ENCODE measurements at regions of chr1 and their contacts with region 1.

Region 1: DNA sequence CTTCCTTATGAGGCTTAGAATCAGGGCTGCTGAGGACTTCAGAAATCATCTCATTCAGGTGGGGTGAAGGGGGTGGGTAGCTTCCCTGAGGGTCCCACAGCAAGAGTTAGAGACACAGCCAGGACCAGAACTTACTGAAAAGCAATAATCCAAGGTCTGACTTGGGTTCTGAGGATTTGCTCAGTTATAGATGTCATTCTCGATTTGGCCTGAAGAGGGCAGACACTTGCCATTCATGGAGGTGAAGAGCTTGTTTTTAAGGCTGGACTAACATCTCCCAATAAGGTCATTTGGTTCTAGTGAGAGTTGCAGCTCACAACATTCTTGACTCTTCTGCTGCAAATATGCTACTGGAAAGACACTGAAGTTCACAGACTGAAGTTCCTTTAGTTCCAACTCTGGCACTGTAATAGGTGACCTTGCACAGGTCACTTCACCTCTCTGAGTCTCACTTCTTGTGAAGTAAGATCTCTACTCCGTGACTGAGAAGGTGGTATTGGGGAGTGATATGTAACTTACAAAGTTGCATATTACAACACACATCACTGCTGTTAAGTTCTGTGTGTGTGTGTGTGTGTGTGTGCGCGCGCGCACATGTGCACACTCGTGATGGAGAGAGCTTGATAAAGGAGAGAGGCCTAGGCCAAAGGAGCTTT is 69.8 kb upstream of the DIRAS3 start:
- DNase-seq: peak; percentile 44
- ATAC-seq: peak; percentile 57
- H3K4me3 Mint-ChIP-seq: no peak overlapping the region
- H3K27ac Mint-ChIP-seq: no peak overlapping the region
- H3K4me1 Mint-ChIP-seq: peaks cover 2% of the 10 kb centered on the region
- H3K27me3 Mint-ChIP-seq: no peaks in the 10 kb centered on the region

Region 2: DNA sequence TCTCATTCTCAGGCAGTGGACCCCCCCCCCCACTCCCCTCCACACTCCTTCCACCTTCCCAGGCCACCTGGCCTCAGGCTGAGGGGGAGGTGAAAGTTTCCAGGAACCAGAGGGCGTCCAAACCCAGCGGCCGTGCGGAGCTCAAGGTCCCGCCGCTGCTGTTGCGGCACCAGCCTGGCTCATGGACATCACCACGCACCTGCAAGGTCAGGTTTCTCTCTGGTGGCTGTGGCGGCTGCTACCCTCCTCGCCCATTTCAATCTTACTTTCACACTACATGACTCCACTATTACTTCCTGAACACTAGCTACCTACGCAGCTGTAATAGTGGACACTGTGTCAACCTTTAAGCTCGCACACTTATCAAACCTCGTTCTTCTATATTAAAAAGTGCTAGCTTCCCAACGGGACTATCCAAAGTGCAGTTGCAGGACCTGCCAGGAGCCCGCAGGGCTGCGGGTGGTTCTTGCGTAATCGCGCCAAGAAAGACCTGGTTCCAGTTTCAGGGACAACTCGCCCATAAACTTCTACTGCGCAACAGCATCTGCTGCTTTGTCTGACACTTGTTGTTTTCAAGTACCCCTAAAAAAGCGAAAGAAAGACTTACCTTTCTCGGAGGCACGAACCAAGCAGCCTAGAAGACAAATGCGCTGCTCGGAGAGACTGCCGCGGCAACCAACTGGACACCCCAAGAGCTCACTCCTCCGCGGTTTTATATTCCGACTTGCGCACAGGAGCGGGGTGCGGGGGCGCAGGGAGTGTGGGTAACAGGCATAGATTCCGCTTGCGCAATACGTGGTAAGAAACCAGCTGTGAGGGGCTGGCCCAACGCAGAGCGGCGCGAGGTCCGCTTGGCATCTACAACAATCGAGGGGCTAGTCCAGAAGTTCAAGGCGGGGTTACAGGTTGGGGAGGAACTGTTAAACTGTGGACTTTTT is 70.1 kb before region 1 on chr1 and contains the start of gene DIRAS3:
- CTCF ChIA-PET with region 1: no interaction called
- DNase-seq: no peak
- ATAC-seq: no peak
- H3K4me3 Mint-ChIP-seq: no peak within 1 kb of the TSS
- H3K27ac Mint-ChIP-seq: no peak within 1 kb of the TSS
- H3K4me1 Mint-ChIP-seq: no peaks in the 10 kb centered on the region
- H3K27me3 Mint-ChIP-seq: peaks cover 27% of the 10 kb centered on the region
- total RNA-seq, gene DIRAS3: 0.26 TPM in 1 of 2 experiments, not detected in the other

Region 3: GRCh38 chr1:68087184-68087583 is 33.1 kb before region 1 on chr1:
- CTCF ChIA-PET with region 1: no interaction called
- DNase-seq: no peak
- ATAC-seq: no peak
- H3K4me3 Mint-ChIP-seq: no peak overlapping the region
- H3K27ac Mint-ChIP-seq: no peak overlapping the region
- H3K4me1 Mint-ChIP-seq: no peaks in the 10 kb centered on the region
- H3K27me3 Mint-ChIP-seq: no peaks in the 10 kb centered on the region

Region 4: GRCh38 chr1:68107771-68108170 is 12.5 kb before region 1 on chr1:
- CTCF ChIA-PET with region 1: interaction called, 10 read pairs
- DNase-seq: no peak
- ATAC-seq: no peak
- H3K4me3 Mint-ChIP-seq: no peak overlapping the region
- H3K27ac Mint-ChIP-seq: no peak overlapping the region
- H3K4me1 Mint-ChIP-seq: no peaks in the 10 kb centered on the region
- H3K27me3 Mint-ChIP-seq: peaks cover 7% of the 10 kb centered on the region

Region 5: DNA sequence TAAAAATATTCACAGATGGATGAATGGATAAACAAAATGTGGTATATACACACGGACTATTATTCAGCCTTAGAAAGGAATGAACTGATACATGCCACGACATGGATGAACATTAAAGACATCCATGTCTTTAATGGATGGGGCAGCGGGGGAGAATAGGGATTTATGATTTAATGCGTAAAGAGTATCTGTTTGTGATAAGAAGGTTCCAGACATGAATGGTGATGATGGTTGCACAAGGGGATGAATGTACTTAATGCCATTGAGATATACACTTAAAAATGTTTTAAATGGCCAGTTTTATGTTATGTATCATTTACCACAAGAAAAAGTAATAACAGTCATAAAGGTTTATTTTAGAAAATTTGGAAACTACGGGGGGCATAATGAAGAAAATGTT is 220.7 kb after region 1 on chr1:
- CTCF ChIA-PET with region 1: interaction called, 12 read pairs
- DNase-seq: no peak
- ATAC-seq: no peak
- H3K4me3 Mint-ChIP-seq: no peak overlapping the region
- H3K27ac Mint-ChIP-seq: no peak overlapping the region
- H3K4me1 Mint-ChIP-seq: no peaks in the 10 kb centered on the region
- H3K27me3 Mint-ChIP-seq: no peaks in the 10 kb centered on the region

Region 6: DNA sequence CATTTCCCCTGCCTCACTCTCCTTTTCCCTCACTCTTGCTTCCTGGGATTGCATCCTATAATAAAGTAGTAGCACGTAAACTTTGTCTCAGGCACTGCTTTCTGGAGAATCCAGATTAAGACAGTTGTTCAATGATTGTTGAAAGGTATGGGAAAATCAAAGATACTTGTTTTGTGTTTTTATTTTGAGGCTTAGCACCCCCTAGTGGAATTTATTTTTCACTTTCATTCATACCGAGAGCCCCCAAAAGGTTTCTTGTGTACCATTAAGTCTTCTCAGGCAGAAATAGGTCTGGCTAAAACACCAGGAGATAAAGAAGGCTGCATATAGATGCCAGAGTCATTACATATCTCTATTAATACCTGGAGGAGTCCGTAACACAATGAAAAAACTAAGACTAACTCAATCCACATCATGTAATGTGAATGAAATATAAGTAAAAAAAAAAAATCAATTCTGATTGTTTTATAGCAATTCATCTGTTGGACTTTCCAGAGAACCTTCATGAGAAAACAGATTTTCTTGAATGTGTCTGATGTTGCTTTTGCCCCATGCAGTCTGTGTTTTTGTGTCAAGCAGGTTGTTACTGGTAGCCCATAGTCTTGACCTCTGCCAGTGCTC is 226.0 kb after region 1 on chr1:
- CTCF ChIA-PET with region 1: interaction called, 12 read pairs
- DNase-seq: no peak
- ATAC-seq: no peak
- H3K4me3 Mint-ChIP-seq: no peak overlapping the region
- H3K27ac Mint-ChIP-seq: no peak overlapping the region
- H3K4me1 Mint-ChIP-seq: no peaks in the 10 kb centered on the region
- H3K27me3 Mint-ChIP-seq: no peaks in the 10 kb centered on the region

Region 7: DNA sequence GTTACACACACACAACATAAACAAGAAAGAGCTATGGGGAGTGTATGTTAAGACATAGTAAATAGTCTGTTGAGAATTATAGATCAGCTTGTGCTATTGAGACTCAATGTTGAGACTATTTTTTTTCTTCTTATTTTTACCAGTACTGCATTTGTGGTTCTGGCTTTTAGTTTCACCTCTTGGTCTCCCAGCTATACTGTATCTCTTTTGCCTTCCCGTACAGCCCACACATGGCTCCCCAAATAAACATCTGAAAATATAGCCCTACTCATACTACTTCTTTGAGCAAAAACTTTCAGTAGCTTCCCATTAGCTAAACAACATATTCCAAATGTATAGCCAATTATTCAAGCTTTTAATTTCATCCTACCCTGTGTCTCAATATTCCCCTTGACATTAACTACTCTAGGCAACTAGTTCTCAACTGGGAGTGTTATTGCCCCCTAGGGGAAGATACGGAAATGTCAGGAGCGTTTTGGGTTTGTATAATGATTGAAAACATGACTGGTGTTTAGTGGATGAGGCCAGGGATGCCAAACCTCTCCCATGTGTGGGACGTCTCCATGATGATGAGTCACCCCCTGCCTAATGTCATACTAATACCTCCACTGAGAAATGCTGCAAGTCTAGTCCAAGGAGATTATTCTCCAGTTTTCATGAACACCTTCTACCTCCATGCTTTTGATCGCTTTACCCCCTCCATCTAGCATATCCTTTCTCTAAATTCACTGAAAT is 322.7 kb after region 1 on chr1:
- CTCF ChIA-PET with region 1: interaction called, 15 read pairs
- DNase-seq: no peak
- ATAC-seq: no peak
- H3K4me3 Mint-ChIP-seq: no peak overlapping the region
- H3K27ac Mint-ChIP-seq: no peak overlapping the region
- H3K4me1 Mint-ChIP-seq: no peaks in the 10 kb centered on the region
- H3K27me3 Mint-ChIP-seq: no peaks in the 10 kb centered on the region

Region 8: DNA sequence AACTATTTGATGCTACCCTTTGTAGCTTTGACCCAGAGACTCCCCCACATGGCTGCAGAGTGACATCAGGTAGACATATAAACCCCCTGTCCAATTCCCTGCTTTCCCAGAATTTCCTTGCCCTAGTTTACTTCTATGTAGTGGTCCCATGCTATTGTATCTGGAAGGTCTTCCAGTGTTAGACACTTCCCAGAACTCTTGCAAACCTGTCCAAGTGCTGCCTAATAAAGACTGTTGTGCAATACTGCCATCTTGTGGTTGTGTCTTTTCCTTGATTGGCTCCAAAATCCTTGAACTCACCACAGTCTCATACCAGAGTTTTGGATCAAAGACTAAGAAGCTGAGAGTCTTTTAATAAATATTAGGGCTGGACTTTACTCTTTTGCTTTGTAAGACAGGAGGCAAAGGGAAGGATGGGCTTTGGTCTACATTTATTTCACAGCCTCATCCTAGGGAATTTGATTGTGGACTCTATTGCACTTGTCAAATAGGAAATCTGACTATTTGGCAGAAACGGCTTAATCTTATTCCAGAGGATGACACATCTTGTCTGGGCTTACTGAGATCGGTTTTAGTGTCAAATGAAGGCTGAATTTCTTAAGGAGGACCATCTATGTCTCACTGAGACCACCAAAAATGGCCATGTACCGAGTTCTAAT is 1617.4 kb after region 1 on chr1:
- CTCF ChIA-PET with region 1: interaction called, 14 read pairs
- DNase-seq: no peak
- ATAC-seq: peak; percentile 33
- H3K4me3 Mint-ChIP-seq: no peak overlapping the region
- H3K27ac Mint-ChIP-seq: no peak overlapping the region
- H3K4me1 Mint-ChIP-seq: no peaks in the 10 kb centered on the region
- H3K27me3 Mint-ChIP-seq: no peaks in the 10 kb centered on the region